CD8-positive, alpha-beta T cell (primary cell): ENCODE measurements at regions of chr19 and their contacts with region 1.

Region 1: DNA sequence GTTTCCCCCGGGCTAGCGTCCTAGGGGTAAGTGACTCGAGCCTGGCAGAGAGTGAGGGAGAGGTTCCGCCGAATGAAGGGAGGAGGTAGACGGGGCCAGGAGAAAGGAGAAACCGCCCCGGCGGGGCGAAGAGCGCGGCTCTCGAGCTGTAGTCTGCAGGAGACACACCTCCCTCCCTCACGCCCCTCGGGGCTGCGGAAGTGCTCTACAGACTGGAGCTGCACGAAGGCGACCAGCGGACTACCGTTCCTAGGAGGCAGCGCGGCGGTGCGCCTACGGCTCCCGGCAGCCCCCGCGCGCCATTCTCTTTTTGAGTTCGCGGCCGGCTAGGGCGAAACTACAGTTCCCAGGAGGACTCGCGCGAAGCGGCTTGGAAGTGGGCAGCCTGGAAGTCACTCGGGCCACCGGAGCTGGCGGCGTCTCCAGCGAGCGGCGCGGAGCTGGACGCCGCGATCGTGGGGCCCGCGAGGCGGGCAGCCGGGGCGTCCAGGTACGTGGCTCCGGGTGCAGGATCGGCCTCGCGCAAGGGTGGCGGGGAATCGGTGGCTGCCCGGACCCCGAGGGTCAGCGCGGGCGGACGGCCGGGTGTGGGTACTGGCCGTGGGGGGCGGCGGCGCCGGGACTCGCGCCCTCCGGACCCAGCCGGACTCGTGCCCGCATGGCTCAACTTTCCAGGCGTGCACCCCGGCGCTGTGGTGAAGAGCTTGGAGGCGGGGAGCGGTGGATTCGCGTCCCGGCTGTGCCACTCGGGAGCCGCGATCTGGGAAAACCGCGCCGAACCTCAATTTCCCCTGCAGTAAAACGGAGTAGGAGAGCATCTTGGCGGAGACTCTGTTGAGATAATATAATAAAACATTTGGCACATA is at the start of gene SIPA1L3:
- DNase-seq: peak; percentile 79 to 95 (median 93)
- ATAC-seq: peak; percentile 98
- H3K4me3 ChIP-seq: peak within 1 kb of the TSS; percentile 74 to 98
- H3K4me3 Mint-ChIP-seq: peak within 1 kb of the TSS; percentile 92
- H3K27ac ChIP-seq: peak within 1 kb of the TSS; percentile 64 to 68
- H3K27ac Mint-ChIP-seq: peak within 1 kb of the TSS; percentile 90
- H3K4me1 ChIP-seq: peaks cover 20% of the 10 kb centered on the region
- H3K4me1 Mint-ChIP-seq: peaks cover 31% of the 10 kb centered on the region
- H3K27me3 ChIP-seq: no peaks in the 10 kb centered on the region
- H3K27me3 Mint-ChIP-seq: no peaks in the 10 kb centered on the region
- CTCF ChIP-seq: no peak
- total RNA-seq, gene SIPA1L3: 13.5 to 14.6 TPM

Region 2: GRCh38 chr19:37370880-37371661 is 536.0 kb before region 1 on chr19 and contains the start of gene ZNF527:
- CTCF ChIA-PET with region 1: no interaction called
- POLR2A ChIA-PET with region 1: interaction called, 3 read pairs
- intact Hi-C with region 1: loop called (anchors 1 kb)
- DNase-seq: peak; percentile 94 to 98 (median 97)
- ATAC-seq: peak; percentile 92
- H3K4me3 ChIP-seq: peak within 1 kb of the TSS; percentile 80 to 95
- H3K4me3 Mint-ChIP-seq: peak within 1 kb of the TSS; percentile 99
- H3K27ac ChIP-seq: peak within 1 kb of the TSS; percentile 82 to 90
- H3K27ac Mint-ChIP-seq: peak within 1 kb of the TSS; percentile 96
- H3K4me1 ChIP-seq: peaks cover 7% of the 10 kb centered on the region
- H3K4me1 Mint-ChIP-seq: peaks cover 20% of the 10 kb centered on the region
- H3K27me3 ChIP-seq: no peaks in the 10 kb centered on the region
- H3K27me3 Mint-ChIP-seq: no peaks in the 10 kb centered on the region
- CTCF ChIP-seq: no peak
- total RNA-seq, gene ZNF527: 12.9 to 14.2 TPM

Region 3: DNA sequence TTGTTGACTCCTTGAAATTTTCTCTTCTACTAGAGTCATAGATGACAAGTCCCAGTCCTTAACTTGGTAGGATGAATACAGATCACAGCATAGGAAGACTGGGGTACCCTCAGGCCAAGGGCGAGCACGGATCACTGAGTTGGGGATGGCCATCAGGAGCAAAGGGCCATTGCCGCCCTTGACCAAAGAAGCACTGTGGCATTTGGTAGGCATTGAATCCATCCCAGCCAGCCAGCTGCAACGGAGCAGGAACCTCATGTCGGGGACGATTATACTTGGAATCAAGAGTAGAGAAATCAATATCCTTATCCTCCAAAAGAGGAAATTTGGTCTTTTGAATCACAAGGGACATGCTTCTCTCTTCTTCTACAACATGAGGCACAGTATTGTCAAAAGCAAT is 77.6 kb before region 1 on chr19:
- CTCF ChIA-PET with region 1: no interaction called
- POLR2A ChIA-PET with region 1: no interaction called
- intact Hi-C with region 1: no loop called
- DNase-seq: no peak
- ATAC-seq: no peak
- H3K4me3 ChIP-seq: no peak overlapping the region
- H3K4me3 Mint-ChIP-seq: no peak overlapping the region
- H3K27ac ChIP-seq: no peak overlapping the region
- H3K27ac Mint-ChIP-seq: no peak overlapping the region
- H3K4me1 ChIP-seq: no peaks in the 10 kb centered on the region
- H3K4me1 Mint-ChIP-seq: no peaks in the 10 kb centered on the region
- H3K27me3 ChIP-seq: no peaks in the 10 kb centered on the region
- H3K27me3 Mint-ChIP-seq: peaks cover 2% of the 10 kb centered on the region
- CTCF ChIP-seq: no peak

Region 4: GRCh38 chr19:38049105-38049649 is 142.1 kb after region 1 on chr19:
- CTCF ChIA-PET with region 1: interaction called, 3 read pairs
- POLR2A ChIA-PET with region 1: interaction called, 5 read pairs
- intact Hi-C with region 1: loop called (anchors 1 to 2 kb)
- DNase-seq: peak in 8 of 9 experiments; percentile 31 to 89 (median 61)
- ATAC-seq: peak; percentile 86
- H3K4me3 ChIP-seq: peak overlapping the region; percentile 29
- H3K4me3 Mint-ChIP-seq: peak overlapping the region; percentile 74
- H3K27ac ChIP-seq: peak overlapping the region; percentile 69 to 90
- H3K27ac Mint-ChIP-seq: peak overlapping the region; percentile 98
- H3K4me1 ChIP-seq: peaks cover 31% of the 10 kb centered on the region
- H3K4me1 Mint-ChIP-seq: peaks cover 53% of the 10 kb centered on the region
- H3K27me3 ChIP-seq: no peaks in the 10 kb centered on the region
- H3K27me3 Mint-ChIP-seq: no peaks in the 10 kb centered on the region
- CTCF ChIP-seq: no peak

Region 5: DNA sequence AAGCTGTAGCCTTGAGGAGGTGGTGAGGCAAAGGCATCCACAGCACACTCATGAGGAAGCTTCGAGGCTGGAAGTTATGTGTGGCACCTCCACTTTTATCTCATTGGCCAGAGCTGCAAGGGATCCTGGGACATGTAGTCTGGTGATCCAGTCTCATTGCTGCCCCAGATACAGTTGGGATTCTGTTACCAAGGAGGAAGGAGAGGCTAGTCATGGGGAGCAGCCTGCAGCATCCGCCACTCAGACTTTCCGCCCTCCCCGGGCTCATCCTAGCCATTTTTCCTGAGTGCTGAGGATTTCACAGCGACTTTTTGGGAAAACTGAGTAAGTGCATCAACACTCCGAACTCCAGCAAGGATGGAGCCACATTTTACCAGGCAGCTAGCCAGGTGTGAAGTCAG is 242.6 kb after region 1 on chr19:
- CTCF ChIA-PET with region 1: interaction called, 5 read pairs
- POLR2A ChIA-PET with region 1: no interaction called
- intact Hi-C with region 1: loop called in 1 of 2 experiments (anchors 2 kb)
- DNase-seq: no peak
- ATAC-seq: no peak
- H3K4me3 ChIP-seq: no peak overlapping the region
- H3K4me3 Mint-ChIP-seq: no peak overlapping the region
- H3K27ac ChIP-seq: no peak overlapping the region
- H3K27ac Mint-ChIP-seq: no peak overlapping the region
- H3K4me1 ChIP-seq: no peaks in the 10 kb centered on the region
- H3K4me1 Mint-ChIP-seq: no peaks in the 10 kb centered on the region
- H3K27me3 ChIP-seq: no peaks in the 10 kb centered on the region
- H3K27me3 Mint-ChIP-seq: no peaks in the 10 kb centered on the region
- CTCF ChIP-seq: no peak

Region 6: GRCh38 chr19:38245826-38246498 is 338.9 kb after region 1 on chr19:
- CTCF ChIA-PET with region 1: interaction called, 23 read pairs
- POLR2A ChIA-PET with region 1: no interaction called
- intact Hi-C with region 1: loop called (anchors 1 to 5 kb)
- DNase-seq: no peak
- ATAC-seq: no peak
- H3K4me3 ChIP-seq: no peak overlapping the region
- H3K4me3 Mint-ChIP-seq: no peak overlapping the region
- H3K27ac ChIP-seq: no peak overlapping the region
- H3K27ac Mint-ChIP-seq: no peak overlapping the region
- H3K4me1 ChIP-seq: no peaks in the 10 kb centered on the region
- H3K4me1 Mint-ChIP-seq: peaks cover 4% of the 10 kb centered on the region
- H3K27me3 ChIP-seq: no peaks in the 10 kb centered on the region
- H3K27me3 Mint-ChIP-seq: peaks cover 5% of the 10 kb centered on the region
- CTCF ChIP-seq: no peak

Region 7: DNA sequence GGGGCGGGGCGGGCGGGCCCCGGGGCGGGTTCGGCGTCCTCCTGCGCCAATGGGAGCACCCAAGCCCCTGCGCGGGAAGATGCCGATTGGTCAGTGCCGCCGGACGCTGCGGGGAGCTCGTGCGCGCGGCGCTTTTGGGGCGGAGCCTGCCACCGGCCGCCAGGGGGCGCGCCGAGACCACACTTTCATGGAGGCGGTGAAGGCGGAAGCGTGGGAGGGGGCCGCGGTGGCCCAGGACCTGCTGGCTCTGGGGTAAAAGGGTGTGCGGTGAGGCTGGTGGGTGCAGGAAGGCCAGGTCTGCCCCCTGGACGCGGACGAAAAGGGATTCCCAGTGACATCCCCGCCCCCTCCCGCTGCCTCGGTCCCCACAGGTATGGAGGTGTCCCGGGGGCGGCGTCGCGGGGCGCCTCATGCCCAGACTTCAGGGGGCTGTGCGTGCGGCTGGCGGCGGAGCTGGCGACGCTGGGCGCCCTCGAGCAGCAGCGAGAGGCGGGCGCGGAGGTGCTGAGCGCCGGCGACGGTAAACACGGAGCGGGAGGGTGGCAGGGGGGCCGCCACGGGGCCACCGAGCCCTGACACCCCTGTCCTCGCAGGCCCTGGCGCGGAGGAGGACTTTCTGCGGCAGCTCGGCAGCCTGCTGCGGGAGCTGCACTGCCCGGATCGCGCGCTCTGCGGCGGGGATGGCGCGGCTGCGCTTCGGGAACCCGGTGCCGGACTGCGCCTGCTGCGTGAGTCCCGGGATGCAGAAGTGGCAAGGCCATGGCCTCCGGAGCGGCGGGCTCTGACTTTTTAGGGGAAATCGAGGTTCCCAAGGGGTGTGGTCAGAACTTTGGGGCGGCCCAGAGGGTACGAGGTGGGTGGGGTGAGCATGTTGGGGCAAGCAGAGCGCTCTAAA is 496.1 kb after region 1 on chr19 and contains the start of gene FAM98C:
- CTCF ChIA-PET with region 1: interaction called, 3 read pairs
- POLR2A ChIA-PET with region 1: interaction called, 4 read pairs
- intact Hi-C with region 1: loop called in 1 of 2 experiments (anchors 10 kb)
- DNase-seq: peak; percentile 95 to 99 (median 97)
- ATAC-seq: peak; percentile 96
- H3K4me3 ChIP-seq: peak within 1 kb of the TSS; percentile 76 to 95
- H3K4me3 Mint-ChIP-seq: peak within 1 kb of the TSS; percentile 94
- H3K27ac ChIP-seq: peak within 1 kb of the TSS; percentile 79 to 81
- H3K27ac Mint-ChIP-seq: peak within 1 kb of the TSS; percentile 98
- H3K4me1 ChIP-seq: peaks cover 11% of the 10 kb centered on the region
- H3K4me1 Mint-ChIP-seq: peaks cover 15% of the 10 kb centered on the region
- H3K27me3 ChIP-seq: no peaks in the 10 kb centered on the region
- H3K27me3 Mint-ChIP-seq: no peaks in the 10 kb centered on the region
- CTCF ChIP-seq: peak; percentile 95
- total RNA-seq, gene FAM98C: 28.2 to 29.3 TPM

Region 8: DNA sequence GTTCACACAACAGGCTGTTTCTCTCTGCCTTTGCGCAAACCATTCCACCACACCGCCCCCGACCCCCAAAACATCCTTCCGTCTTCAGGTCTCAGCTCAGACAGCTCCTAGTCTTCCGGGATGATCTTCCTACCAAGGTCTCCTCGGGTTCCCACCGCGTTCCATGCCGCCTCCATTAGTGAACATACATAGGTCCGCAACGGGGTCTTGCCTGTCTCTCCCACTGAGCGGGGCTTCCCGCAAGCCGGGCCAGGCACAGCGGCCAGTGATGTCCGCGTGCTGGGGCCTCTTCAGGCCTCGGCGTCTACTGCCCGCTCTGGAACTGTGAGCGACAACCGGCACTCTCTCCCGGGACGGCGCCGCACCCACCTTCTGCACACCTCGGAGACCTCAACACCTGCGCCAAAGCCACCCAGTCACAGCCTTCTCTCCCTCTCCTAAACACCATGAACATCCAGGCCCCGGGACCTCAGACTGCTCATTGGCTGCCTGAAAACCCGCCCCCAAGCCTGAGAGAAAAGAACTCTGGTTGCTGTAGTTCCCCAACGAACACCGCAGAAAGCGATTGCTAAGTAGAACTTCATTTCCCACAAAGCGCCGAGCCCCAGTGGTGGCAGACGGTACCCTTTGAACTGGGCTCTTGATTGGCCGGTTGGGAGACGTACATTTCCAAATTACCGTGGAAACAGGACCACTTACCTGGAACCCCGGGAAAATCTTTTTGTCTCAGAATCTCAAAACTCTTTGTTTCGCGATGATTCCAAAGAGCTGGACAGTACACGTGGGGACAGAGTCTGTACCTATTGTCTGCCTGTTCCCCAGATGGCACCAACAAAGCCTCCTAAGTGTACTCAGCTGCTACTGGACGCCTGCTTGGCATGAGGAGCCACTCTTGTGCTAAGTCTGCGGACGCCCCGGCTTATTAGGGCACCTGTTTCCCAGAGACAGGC is 1917.3 kb after region 1 on chr19:
- CTCF ChIA-PET with region 1: no interaction called
- POLR2A ChIA-PET with region 1: no interaction called
- intact Hi-C with region 1: loop called in 1 of 2 experiments (anchors 5 kb)
- DNase-seq: peak; percentile 72 to 94 (median 87)
- ATAC-seq: peak; percentile 98
- H3K4me3 ChIP-seq: peak overlapping the region; percentile 72 to 79
- H3K4me3 Mint-ChIP-seq: no peak overlapping the region
- H3K27ac ChIP-seq: peak overlapping the region; percentile 43 to 45
- H3K27ac Mint-ChIP-seq: no peak overlapping the region
- H3K4me1 ChIP-seq: peaks cover 27% of the 10 kb centered on the region
- H3K4me1 Mint-ChIP-seq: peaks cover 17% of the 10 kb centered on the region
- H3K27me3 ChIP-seq: no peaks in the 10 kb centered on the region
- H3K27me3 Mint-ChIP-seq: no peaks in the 10 kb centered on the region
- CTCF ChIP-seq: no peak